GM23248 (cell line): ENCODE measurements at regions of chr6 and their contacts with region 1.

Region 1: DNA sequence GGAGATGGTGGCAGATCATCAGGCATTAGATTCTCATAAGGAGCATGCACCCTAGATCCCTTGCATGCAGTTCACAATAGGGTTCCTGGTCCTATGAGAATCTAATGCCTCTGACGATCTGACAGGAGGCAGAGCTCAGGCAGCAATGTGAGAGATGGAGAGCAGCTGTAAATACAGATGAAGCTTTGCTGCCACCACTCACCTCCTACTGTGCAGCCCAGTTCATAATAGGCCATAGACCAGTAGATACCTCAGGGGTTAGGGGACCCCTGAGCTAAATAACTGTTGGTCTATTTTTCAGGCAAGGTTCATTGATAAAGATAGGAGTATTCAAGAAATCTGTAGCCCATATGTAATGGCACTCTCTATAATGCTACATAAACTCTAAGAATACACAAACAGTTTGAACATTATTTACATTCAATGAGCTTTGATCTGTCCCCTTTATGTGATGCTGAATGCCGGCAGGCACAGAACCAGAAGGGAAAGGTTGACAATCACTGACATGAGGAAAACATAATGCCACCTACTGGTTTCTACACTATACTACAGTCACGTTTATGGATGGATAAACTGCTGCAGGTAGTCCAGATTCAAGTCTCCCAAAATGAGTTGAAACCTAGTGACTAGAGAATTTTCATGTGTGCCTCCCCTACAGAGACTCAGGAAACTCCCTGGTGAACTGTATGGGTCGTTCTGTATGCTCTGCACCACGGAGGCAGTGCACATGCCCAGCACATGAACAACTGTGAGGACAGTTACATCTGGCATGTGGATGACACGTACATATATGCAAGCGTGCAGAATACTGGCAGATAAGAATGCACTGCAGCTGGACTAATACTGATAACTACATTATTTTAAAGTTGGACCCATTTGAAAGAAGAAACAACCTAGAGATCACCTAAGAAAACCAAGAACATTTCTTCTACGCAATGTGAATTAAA is 72.0 kb downstream of the DST start:
- DNase-seq: peak; percentile 55
- H3K4me3 ChIP-seq: no peak overlapping the region
- H3K27ac ChIP-seq: no peak overlapping the region
- H3K4me1 ChIP-seq: no peaks in the 10 kb centered on the region
- H3K27me3 ChIP-seq: no peaks in the 10 kb centered on the region

Region 2: GRCh38 chr6:55875400-55875799 is 695.3 kb before region 1 on chr6 and contains the start of gene BMP5:
- in situ Hi-C with region 1: no loop called
- DNase-seq: no peak
- H3K4me3 ChIP-seq: no peak within 1 kb of the TSS
- H3K27ac ChIP-seq: no peak within 1 kb of the TSS
- H3K4me1 ChIP-seq: no peaks in the 10 kb centered on the region
- H3K27me3 ChIP-seq: peaks cover 20% of the 10 kb centered on the region
- total RNA-seq, gene BMP5: not detected in 2 replicates

Region 3: DNA sequence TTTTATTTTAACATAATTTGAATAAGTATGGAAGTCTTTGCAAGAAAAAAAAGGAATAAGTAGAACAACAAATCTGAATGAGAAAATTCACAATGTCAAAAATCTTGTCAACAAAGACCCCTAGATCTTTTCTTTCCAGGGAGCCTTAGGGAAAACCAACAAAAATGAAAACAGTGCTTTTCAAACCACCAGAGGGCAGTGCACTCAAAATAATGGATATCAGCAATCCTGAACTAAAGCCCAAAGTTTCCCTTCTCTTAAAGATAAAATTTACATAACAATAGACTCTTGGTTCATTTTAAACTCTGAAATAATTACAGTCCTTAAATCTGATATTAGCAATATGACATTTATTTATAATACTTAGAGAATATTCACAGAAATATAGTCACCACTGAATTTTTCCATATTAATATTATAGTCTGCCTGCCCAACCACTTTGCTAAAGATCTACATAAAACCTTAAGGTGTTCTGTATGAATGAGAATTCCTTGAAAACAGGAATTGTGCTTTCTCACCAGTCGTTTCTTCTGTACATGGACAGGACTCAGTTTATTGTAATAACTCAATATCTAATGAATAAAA is 590.0 kb before region 1 on chr6:
- in situ Hi-C with region 1: loop called (anchors 25 kb)
- DNase-seq: peak; percentile 67
- H3K4me3 ChIP-seq: no peak overlapping the region
- H3K27ac ChIP-seq: no peak overlapping the region
- H3K4me1 ChIP-seq: no peaks in the 10 kb centered on the region
- H3K27me3 ChIP-seq: no peaks in the 10 kb centered on the region

Region 4: DNA sequence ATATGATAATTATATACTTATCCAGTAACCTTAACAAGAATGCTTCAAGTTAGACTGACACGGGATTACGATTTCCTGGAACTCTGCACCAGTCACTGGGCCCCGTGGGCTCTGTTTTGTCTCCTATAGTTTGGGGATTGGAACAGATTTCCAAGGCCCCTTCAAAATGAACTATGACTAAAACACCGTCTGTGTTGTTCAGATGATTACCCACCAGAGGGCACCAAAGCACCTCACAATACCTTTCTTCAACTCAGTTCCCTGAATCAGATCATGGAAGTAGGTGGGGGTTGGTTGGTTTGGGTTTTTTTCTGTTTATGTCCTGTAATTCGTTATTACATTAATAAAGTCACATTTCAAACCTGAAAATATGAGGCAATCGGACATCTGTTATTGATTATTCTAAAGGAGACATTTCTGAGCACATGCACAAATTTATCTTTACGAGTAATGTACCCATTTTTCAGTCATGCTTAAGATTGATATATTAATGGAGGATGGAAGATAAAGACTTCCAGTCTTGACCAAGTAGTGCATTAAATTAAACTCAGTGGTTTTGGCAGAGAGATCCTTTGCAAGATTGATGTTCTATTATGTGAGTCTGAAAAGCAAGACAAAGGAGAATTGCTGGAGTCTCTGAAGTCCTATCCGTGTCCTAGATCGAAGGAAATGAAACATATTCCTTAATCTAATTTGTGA is 211.3 kb before region 1 on chr6:
- in situ Hi-C with region 1: loop called (anchors 10 kb)
- DNase-seq: peak; percentile 77
- H3K4me3 ChIP-seq: no peak overlapping the region
- H3K27ac ChIP-seq: no peak overlapping the region
- H3K4me1 ChIP-seq: peaks cover 28% of the 10 kb centered on the region
- H3K27me3 ChIP-seq: no peaks in the 10 kb centered on the region